Heart right ventricle (tissue), 16 donors: ENCODE measurements at regions of chr5 and their contacts with region 1.

Region 1: GRCh38 chr5:149551200-149552037 is at the start of gene CSNK1A1:
- DNase-seq: peak; percentile 98 to 99
- ATAC-seq: peak; percentile 96 to 99 (median 98)
- H3K4me3 ChIP-seq: peak within 1 kb of the TSS; percentile 53 to 99 (median 84)
- H3K27ac ChIP-seq: peak within 1 kb of the TSS; percentile 88 to 100 (median 99)
- H3K4me1 ChIP-seq: peaks cover 7 to 49% (median 40%) of the 10 kb centered on the region in 9 donors
- H3K27me3 ChIP-seq: no peaks in the 10 kb centered on the region
- CTCF ChIP-seq: peak; percentile 64 to 87 (median 81)
- total RNA-seq, gene CSNK1A1: 174 to 363 (median 224) TPM

Region 2: DNA sequence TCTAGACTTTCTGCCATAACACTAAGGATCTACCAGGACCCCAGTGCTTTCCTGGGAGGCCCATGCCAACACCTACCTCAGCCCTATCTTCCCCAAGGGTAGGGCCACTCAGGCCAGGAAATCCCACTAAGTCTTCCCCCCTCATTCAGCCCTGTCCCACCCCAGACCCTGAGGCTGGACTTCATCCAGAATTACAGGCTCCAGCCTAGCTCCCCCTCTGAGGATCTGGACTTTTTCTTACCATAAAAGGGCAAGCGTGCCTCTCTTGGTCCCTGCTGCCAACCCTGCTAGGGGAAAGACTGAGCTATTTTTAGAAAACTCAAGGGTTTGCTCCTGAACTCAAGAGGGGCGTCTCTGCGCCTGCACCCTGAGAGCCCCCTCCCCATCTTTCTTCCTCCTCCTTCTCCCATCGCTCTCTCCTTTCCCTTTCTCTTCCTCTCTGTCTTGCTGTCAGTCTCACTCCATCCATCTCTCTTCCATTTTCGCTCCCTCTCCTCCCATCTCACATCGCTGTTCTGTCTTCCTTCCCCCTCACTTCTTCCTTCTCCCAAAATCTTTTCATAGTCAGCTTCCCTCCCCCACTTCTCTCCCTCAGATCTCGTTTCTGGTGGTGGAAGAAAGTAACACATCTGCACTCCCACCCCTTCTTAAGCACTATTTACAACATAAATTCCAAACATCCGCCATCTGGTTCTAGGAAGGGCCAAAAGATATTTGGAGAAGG is 134.3 kb before region 1 on chr5:
- intact Hi-C with region 1: no loop called
- DNase-seq: peak in 1 of 2 donors; percentile 30
- ATAC-seq: peak in 3 of 8 donors; percentile 1 to 12 (median 4)
- H3K4me3 ChIP-seq: peak overlapping the region in 4 of 10 donors; percentile 1 to 64 (median 14)
- H3K27ac ChIP-seq: peak overlapping the region; percentile 42 to 99 (median 90)
- H3K4me1 ChIP-seq: peaks cover 23 to 100% (median 79%) of the 10 kb centered on the region in 9 donors
- H3K27me3 ChIP-seq: no peaks in the 10 kb centered on the region
- CTCF ChIP-seq: no peak

Region 3: DNA sequence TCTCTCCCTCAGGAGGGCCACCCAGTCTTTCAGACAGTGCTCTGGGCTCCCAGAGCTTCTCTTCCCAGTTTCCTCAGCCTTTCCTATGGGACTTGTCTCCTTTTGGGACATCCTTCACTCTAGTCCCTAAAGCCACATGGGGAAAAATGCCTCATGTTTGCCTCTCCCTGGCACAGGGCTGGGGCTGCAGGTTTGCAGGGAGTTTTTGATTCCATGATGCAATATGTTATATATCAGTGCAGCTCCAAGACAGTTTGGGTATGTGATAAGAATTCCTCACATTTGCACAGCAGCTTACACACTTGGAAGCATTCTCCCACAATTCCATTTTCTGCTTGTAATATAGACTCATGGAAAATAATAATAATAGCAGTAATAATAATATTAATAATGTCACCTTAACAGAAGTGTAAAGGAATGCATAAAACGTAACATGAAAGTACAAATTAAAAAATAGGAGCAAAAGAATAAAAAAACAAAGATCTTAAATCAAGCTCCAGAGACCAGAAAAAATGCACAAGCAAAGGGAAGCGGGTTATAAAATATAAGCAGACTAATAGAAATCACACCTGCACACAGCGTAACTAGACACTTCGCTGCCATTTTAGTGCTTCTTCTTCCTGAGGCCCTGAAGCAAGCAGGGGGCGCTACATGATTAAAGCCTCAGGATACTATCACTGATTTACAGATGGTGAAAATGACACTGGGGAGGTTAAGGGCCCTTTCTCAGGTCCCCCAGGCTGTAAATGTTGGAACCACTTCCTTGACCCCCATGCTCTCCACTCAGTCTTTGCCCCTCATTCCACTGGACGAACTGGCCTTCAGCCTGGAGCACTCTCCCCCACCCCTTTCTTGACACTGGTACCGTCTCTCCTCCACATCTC is 102.3 kb before region 1 on chr5:
- intact Hi-C with region 1: loop called in 4 of 10 experiments (anchors 2 to 5 kb)
- DNase-seq: no peak
- ATAC-seq: no peak
- H3K4me3 ChIP-seq: no peak overlapping the region
- H3K27ac ChIP-seq: peak overlapping the region in 9 of 10 donors; percentile 83 to 93 (median 88)
- H3K4me1 ChIP-seq: peaks cover 44 to 88% (median 79%) of the 10 kb centered on the region in 9 donors
- H3K27me3 ChIP-seq: no peaks in the 10 kb centered on the region
- CTCF ChIP-seq: peak in 6 of 9 donors; percentile 25 to 42 (median 34)

Region 4: GRCh38 chr5:149517461-149518122 is 33.8 kb before region 1 on chr5:
- intact Hi-C with region 1: loop called in 3 of 10 experiments (anchors 5 kb)
- DNase-seq: no peak
- ATAC-seq: peak in 7 of 8 donors; percentile 38 to 73 (median 60)
- H3K4me3 ChIP-seq: peak overlapping the region in 2 of 10 donors; percentile 5 to 18
- H3K27ac ChIP-seq: peak overlapping the region in 5 of 10 donors; percentile 2 to 54 (median 21)
- H3K4me1 ChIP-seq: peaks cover 0 to 100% (median 94%) of the 10 kb centered on the region in 9 donors
- H3K27me3 ChIP-seq: no peaks in the 10 kb centered on the region
- CTCF ChIP-seq: peak in 4 of 9 donors; percentile 11 to 43 (median 32)

Region 5: GRCh38 chr5:149581192-149581861 is 29.9 kb after region 1 on chr5 and contains the start of gene ARHGEF37:
- intact Hi-C with region 1: no loop called
- DNase-seq: peak; percentile 95 to 96
- ATAC-seq: peak; percentile 84 to 93 (median 89)
- H3K4me3 ChIP-seq: peak within 1 kb of the TSS; percentile 14 to 83 (median 60)
- H3K27ac ChIP-seq: peak within 1 kb of the TSS; percentile 85 to 97 (median 93)
- H3K4me1 ChIP-seq: peaks cover 18 to 52% (median 40%) of the 10 kb centered on the region in 9 donors
- H3K27me3 ChIP-seq: peaks cover 0 to 12% (median 0%) of the 10 kb centered on the region in 7 donors
- CTCF ChIP-seq: peak in 1 of 9 donors; percentile 15
- total RNA-seq, gene ARHGEF37: 13.1 to 31.8 (median 18.3) TPM

Region 6: GRCh38 chr5:149593370-149593769 is 42.0 kb after region 1 on chr5:
- intact Hi-C with region 1: no loop called
- DNase-seq: no peak
- ATAC-seq: no peak
- H3K4me3 ChIP-seq: no peak overlapping the region
- H3K27ac ChIP-seq: no peak overlapping the region
- H3K4me1 ChIP-seq: peaks cover 0 to 51% (median 15%) of the 10 kb centered on the region in 9 donors
- H3K27me3 ChIP-seq: no peaks in the 10 kb centered on the region
- CTCF ChIP-seq: no peak